Activated T-helper 2 cell treated with anti-CD3 and anti-CD28 coated beads, Interferon-gamma antibody, Interleukin-2, Interleukin-4, amounts not matched to agents 10 μg/mL and 5 μg/mL and 100 μg/mL, durations not matched to agents 14 hours and 24 hours and 36 hours (primary cell): ENCODE measurements at regions of chr4 and their contacts with region 1.

Region 1: DNA sequence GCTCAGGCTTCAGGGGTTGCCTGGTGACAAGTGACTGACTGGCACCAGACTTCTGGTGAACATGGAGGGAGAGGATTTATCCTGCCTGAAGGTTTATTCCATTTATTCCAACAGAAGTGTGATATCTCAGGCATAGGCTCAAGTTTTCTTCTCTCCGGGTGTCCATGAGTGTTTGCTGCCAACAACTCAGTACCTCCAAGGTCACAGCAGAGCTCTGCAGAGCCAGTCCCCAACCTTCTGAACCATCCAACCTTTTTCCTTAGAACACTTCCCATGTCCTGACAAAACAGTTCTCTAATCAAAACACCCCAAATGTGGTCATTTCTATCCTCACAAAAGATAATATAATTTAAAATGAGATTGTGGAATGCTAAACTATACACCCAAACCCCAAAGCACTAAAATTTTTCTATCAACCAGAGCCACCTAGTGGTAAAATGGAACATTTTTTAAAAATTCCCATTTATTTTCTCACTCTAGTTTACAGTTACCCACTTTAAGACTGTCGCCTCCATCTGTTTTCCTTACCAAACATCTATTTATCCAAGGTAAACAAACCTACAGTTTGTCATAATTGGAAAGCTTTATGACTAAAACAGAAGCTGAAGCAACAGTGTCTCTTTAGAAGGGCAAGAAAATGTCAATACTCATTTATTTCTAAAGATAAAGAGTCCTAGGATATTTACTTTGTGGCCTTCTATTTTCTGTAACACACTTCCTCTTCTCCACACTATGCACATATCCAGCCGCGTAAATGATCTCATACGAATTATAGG is 39.6 kb downstream of the TMEM154 start:
- DNase-seq: no peak
- H3K4me3 Mint-ChIP-seq: no peak overlapping the region
- H3K27ac Mint-ChIP-seq: no peak overlapping the region
- H3K4me1 Mint-ChIP-seq: peaks cover 35% of the 10 kb centered on the region
- H3K27me3 Mint-ChIP-seq: no peaks in the 10 kb centered on the region

Region 2: GRCh38 chr4:152408514-152409327 is 231.5 kb before region 1 on chr4:
- intact Hi-C with region 1: loop called (anchors 1 kb)
- DNase-seq: no peak
- H3K4me3 Mint-ChIP-seq: no peak overlapping the region
- H3K27ac Mint-ChIP-seq: no peak overlapping the region
- H3K4me1 Mint-ChIP-seq: peaks cover 9% of the 10 kb centered on the region
- H3K27me3 Mint-ChIP-seq: no peaks in the 10 kb centered on the region

Region 3: GRCh38 chr4:152454398-152455011 is 185.7 kb before region 1 on chr4:
- intact Hi-C with region 1: loop called (anchors 2 kb)
- DNase-seq: no peak
- H3K4me3 Mint-ChIP-seq: no peak overlapping the region
- H3K27ac Mint-ChIP-seq: no peak overlapping the region
- H3K4me1 Mint-ChIP-seq: peaks cover 27% of the 10 kb centered on the region
- H3K27me3 Mint-ChIP-seq: no peaks in the 10 kb centered on the region

Region 4: DNA sequence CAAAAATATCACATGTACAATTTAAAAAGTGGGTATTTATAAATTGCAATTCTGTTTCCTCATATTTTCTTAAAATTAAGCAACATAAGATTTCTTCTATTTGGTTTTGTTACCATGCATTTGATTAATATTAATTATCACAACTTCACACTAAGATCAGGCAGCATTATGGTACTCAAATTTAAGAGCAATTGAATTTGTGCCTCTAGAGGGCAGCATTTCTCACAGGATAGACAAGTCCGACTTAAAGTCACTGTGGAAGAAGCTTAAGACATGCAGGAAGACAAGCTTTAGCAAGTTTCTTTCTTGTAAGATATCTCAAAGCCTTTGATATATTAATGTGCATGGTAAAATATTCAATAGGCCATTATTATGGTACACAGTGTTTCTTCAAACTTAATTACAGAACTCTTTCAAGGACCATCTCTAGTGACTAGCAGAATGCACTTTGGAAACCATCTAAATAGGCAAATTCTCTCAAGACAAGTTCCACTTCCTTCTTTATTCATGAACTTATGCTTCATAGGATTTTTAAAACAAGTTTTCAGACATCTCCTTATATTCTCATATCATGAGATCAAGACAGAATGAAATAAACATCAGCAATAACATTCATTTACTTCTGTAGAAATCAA is 139.3 kb before region 1 on chr4:
- intact Hi-C with region 1: loop called (anchors 1 kb)
- DNase-seq: peak; percentile 30
- H3K4me3 Mint-ChIP-seq: no peak overlapping the region
- H3K27ac Mint-ChIP-seq: no peak overlapping the region
- H3K4me1 Mint-ChIP-seq: peaks cover 21% of the 10 kb centered on the region
- H3K27me3 Mint-ChIP-seq: no peaks in the 10 kb centered on the region

Region 5: GRCh38 chr4:152735396-152735859 is 95.2 kb after region 1 on chr4:
- intact Hi-C with region 1: loop called (anchors 10 kb)
- DNase-seq: no peak
- H3K4me3 Mint-ChIP-seq: no peak overlapping the region
- H3K27ac Mint-ChIP-seq: no peak overlapping the region
- H3K4me1 Mint-ChIP-seq: peaks cover 4% of the 10 kb centered on the region
- H3K27me3 Mint-ChIP-seq: peaks cover 8% of the 10 kb centered on the region